HepG2 (cell line): ENCODE measurements at regions of chr19 and their contacts with region 1.

Region 1: GRCh38 chr19:1113033-1113985 is 9.5 kb downstream of the GPX4 start:
- DNase-seq: peak; percentile 89
- ATAC-seq: peak; percentile 82
- H3K4me3 ChIP-seq: peak overlapping the region in 2 of 3 experiments; percentile 29 to 60; a peak in 4 of 6 replicates
- H3K27ac ChIP-seq: peak overlapping the region; percentile 80
- H3K4me1 ChIP-seq: peaks cover 15% of the 10 kb centered on the region
- H3K27me3 ChIP-seq: no peaks in the 10 kb centered on the region; a peak in 1 of 5 replicates
- CTCF ChIP-seq: peak; percentile 99
- EP300 ChIP-seq: peak in 1 of 2 experiments; percentile 37; a peak in 1 of 4 replicates
- POLR2A ChIP-seq: peak; percentile 46 to 75; a peak in 3 of 4 replicates
- RAD21 ChIP-seq: peak; percentile 95

Region 2: GRCh38 chr19:1039646-1040475 is 73.4 kb before region 1 on chr19 and contains the start of gene ABCA7:
- CTCF ChIA-PET with region 1: no interaction called
- POLR2A ChIA-PET with region 1: no interaction called
- in situ Hi-C with region 1: no loop called
- intact Hi-C with region 1: no loop called
- DNase-seq: peak; percentile 90
- ATAC-seq: peak; percentile 91
- H3K4me3 ChIP-seq: peak within 1 kb of the TSS; percentile 62 to 79 (median 73)
- H3K27ac ChIP-seq: peak within 1 kb of the TSS; percentile 23
- H3K4me1 ChIP-seq: peaks cover 25% of the 10 kb centered on the region
- H3K27me3 ChIP-seq: no peaks in the 10 kb centered on the region
- CTCF ChIP-seq: no peak; the same call in 1 of the 2 replicates
- EP300 ChIP-seq: no peak
- POLR2A ChIP-seq: peak; percentile 35 to 38; a peak in 3 of 4 replicates
- RAD21 ChIP-seq: peak; percentile 34
- total RNA-seq, gene ABCA7: 1.3 and 4.4 TPM in 2 replicates

Region 3: GRCh38 chr19:1094975-1095701 is 18.2 kb before region 1 on chr19 and contains the start of gene POLR2E:
- CTCF ChIA-PET with region 1: no interaction called
- POLR2A ChIA-PET with region 1: interaction called, 12 read pairs
- in situ Hi-C with region 1: no loop called
- intact Hi-C with region 1: no loop called
- DNase-seq: peak; percentile 94
- ATAC-seq: peak; percentile 73
- H3K4me3 ChIP-seq: peak within 1 kb of the TSS; percentile 91 to 99 (median 97)
- H3K27ac ChIP-seq: peak within 1 kb of the TSS; percentile 57
- H3K4me1 ChIP-seq: peaks cover 55% of the 10 kb centered on the region
- H3K27me3 ChIP-seq: no peaks in the 10 kb centered on the region; a peak in 1 of 5 replicates
- CTCF ChIP-seq: no peak
- EP300 ChIP-seq: peak in 1 of 2 experiments; percentile 48; a peak in 1 of 4 replicates
- POLR2A ChIP-seq: peak; percentile 62 to 74
- RAD21 ChIP-seq: no peak; the same call in 1 of the 2 replicates
- total RNA-seq, gene POLR2E: 140 TPM in 2 replicates

Region 4: DNA sequence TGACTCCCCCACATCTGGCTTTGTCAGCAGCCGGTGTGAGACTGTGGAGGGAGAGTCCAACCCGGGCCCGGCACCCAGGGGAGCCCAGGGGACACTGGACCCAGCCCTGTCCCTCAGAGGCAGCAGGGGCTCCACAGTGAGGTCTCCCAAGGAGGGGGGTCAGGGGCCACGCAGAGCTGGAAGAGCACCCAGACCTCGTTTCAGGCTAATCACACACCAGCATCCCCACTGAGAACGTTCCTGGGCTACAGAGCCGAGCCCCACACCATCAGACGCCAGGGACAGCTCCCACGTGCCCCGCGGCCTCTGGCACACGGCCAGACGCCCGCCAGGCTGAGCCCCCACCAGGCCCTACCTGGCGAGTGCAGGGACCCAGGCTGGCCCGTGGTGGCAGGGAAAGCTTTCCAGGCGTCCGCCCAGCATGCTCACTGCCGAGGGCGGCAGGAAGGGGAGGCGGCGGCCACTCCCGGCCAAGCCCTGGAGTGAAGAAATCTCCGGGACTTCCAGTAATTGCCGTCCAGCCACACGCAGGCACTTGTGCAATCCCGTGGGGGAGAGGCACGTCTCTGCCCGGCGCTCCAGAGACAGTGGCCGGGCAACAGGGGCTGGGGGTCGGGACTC is 41.5 kb after region 1 on chr19:
- CTCF ChIA-PET with region 1: no interaction called
- POLR2A ChIA-PET with region 1: interaction called, 6 read pairs
- in situ Hi-C with region 1: loop called (anchors 5 kb)
- intact Hi-C with region 1: no loop called
- DNase-seq: peak; percentile 67
- ATAC-seq: peak; percentile 61
- H3K4me3 ChIP-seq: peak overlapping the region in 1 of 3 experiments; percentile 61; a peak in 1 of 6 replicates
- H3K27ac ChIP-seq: peak overlapping the region; percentile 49
- H3K4me1 ChIP-seq: peaks cover 20% of the 10 kb centered on the region
- H3K27me3 ChIP-seq: no peaks in the 10 kb centered on the region
- CTCF ChIP-seq: no peak
- EP300 ChIP-seq: no peak
- POLR2A ChIP-seq: no peak
- RAD21 ChIP-seq: no peak

Region 5: DNA sequence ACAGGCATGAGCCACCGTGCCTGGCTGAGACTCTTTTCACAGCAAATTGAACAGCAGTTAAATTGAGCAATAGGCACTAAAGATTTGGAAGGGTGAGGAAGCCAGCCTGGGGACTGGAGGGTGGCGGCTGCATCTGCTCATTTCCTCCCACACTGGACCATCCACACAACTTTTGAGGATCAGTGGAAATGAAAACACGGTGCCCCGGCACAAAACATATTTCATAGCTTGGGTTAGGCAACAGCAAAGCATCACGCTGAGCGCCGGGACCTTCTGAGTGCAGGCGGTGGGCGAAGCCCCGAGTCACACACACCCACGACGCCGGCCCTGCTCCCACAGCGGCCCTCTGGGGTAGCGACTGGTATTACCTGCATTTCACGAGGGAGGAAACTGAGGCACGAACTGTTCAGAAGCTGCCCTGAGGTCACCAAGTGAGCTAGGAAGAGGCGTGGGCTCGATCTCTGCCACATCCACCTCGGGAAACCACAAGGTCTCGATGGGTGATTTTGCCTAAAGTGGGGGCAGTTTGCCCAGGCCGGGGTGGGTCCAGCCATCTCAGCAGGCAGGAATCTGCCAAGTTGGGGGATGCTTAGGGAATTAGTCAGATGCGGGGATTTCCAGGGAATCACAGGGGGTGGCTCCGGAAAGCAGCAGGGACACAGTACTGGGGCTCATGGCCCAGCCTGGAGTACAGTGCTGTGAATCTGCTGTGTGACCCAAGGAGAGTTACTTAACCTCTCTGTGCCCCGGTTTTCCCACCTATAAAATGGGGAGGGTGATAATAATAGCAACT is 64.2 kb after region 1 on chr19:
- CTCF ChIA-PET with region 1: no interaction called
- POLR2A ChIA-PET with region 1: no interaction called
- in situ Hi-C with region 1: no loop called
- intact Hi-C with region 1: no loop called
- DNase-seq: no peak
- ATAC-seq: no peak
- H3K4me3 ChIP-seq: no peak overlapping the region
- H3K27ac ChIP-seq: no peak overlapping the region
- H3K4me1 ChIP-seq: peaks cover 33% of the 10 kb centered on the region
- H3K27me3 ChIP-seq: no peaks in the 10 kb centered on the region
- CTCF ChIP-seq: no peak
- EP300 ChIP-seq: no peak
- POLR2A ChIP-seq: no peak
- RAD21 ChIP-seq: no peak

Region 6: GRCh38 chr19:1189419-1189818 is 76.1 kb after region 1 on chr19:
- CTCF ChIA-PET with region 1: interaction called, 28 read pairs
- POLR2A ChIA-PET with region 1: interaction called, 7 read pairs
- in situ Hi-C with region 1: loop called (anchors 5 kb)
- intact Hi-C with region 1: loop called (anchors 5 kb)
- DNase-seq: no peak
- ATAC-seq: peak; percentile 28
- H3K4me3 ChIP-seq: 0 out of 6 replicates have a peak overlapping the region, but pooled peaks of 1 of the 3 experiments have one; percentile 4
- H3K27ac ChIP-seq: no peak overlapping the region
- H3K4me1 ChIP-seq: peaks cover 40% of the 10 kb centered on the region
- H3K27me3 ChIP-seq: no peaks in the 10 kb centered on the region
- CTCF ChIP-seq: no peak
- EP300 ChIP-seq: no peak
- POLR2A ChIP-seq: no peak
- RAD21 ChIP-seq: no peak

Region 7: DNA sequence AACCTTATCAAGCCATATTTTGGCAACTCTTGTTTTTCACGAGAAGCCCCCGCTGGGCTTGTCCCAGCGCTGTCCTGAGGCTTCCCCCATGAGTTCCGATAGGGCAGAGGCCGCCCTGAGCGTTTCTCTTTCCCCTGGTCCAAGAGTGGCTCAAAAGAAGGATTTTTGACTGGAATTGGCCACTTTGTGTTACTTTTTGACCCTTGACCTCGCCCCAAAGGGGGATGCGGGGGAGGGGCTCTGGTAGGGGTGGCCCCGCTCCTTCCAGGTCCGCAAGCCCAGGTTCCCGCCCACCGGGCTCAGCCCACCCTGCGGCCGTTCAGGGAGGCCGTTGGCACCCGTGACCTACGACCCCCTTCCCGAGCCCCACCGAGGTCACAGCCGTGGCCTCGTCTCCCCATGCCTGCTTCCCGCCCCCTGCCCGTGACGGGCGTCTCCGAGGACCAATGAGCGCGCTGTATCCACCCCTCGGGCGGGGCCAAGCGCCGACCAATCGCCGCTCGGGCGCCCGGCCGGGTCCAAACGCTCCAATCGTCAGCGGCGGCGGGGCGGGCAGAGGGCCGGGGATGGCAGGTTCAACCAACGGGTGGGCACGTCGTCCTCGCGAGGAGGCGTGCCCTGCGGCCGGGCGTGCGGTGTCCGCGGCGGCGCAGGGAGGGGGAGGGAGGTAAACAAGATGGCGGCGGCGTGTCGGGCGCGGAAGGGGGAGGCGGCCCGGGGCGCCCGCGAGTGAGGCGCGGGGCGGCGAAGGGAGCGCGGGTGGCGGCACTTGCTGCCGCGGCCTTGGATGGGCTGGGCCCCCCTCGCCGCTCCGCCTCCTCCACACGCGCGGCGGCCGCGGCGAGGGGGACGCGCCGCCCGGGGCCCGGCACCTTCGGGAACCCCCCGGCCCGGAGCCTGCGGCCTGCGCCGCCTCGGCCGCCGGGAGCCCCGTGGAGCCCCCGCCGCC is 92.1 kb after region 1 on chr19 and contains the start of gene STK11:
- CTCF ChIA-PET with region 1: no interaction called
- POLR2A ChIA-PET with region 1: interaction called, 11 read pairs
- in situ Hi-C with region 1: no loop called
- intact Hi-C with region 1: no loop called
- DNase-seq: peak; percentile 91
- ATAC-seq: peak; percentile 90
- H3K4me3 ChIP-seq: peak within 1 kb of the TSS; percentile 65 to 92 (median 81)
- H3K27ac ChIP-seq: peak within 1 kb of the TSS; percentile 87
- H3K4me1 ChIP-seq: peaks cover 62% of the 10 kb centered on the region
- H3K27me3 ChIP-seq: no peaks in the 10 kb centered on the region; a peak in 1 of 5 replicates
- CTCF ChIP-seq: no peak
- EP300 ChIP-seq: no peak; a peak in 1 of 4 replicates
- POLR2A ChIP-seq: peak; percentile 24 to 56; a peak in 1 of 4 replicates
- RAD21 ChIP-seq: no peak; the same call in 1 of the 2 replicates
- total RNA-seq, gene STK11: 28.4 and 43.6 TPM in 2 replicates

Region 8: GRCh38 chr19:2867025-2867991 is 1754.0 kb after region 1 on chr19 and contains the start of gene ZNF556:
- CTCF ChIA-PET with region 1: no interaction called
- POLR2A ChIA-PET with region 1: no interaction called
- in situ Hi-C with region 1: no loop called
- intact Hi-C with region 1: no loop called
- DNase-seq: peak; percentile 100
- ATAC-seq: peak; percentile 96
- H3K4me3 ChIP-seq: peak within 1 kb of the TSS; percentile 72 to 94 (median 80)
- H3K27ac ChIP-seq: peak within 1 kb of the TSS; percentile 90
- H3K4me1 ChIP-seq: peaks cover 41% of the 10 kb centered on the region
- H3K27me3 ChIP-seq: no peaks in the 10 kb centered on the region
- CTCF ChIP-seq: peak; percentile 25
- EP300 ChIP-seq: peak in 1 of 2 experiments; percentile 24; a peak in 1 of 4 replicates
- POLR2A ChIP-seq: peak; percentile 99
- RAD21 ChIP-seq: peak; percentile 56
- total RNA-seq, gene ZNF556: 28.6 and 41.2 TPM in 2 replicates